IMR-90 (cell line): ENCODE measurements at regions of chr6 and their contacts with region 1.

Region 1: GRCh38 chr6:73129653-73130443 is 95.4 kb downstream of the KHDC1L start:
- DNase-seq: peak; percentile 66
- ATAC-seq: peak; percentile 95
- H3K4me3 ChIP-seq: no peak overlapping the region
- H3K27ac ChIP-seq: no peak overlapping the region
- H3K4me1 ChIP-seq: peaks cover 8% of the 10 kb centered on the region
- H3K27me3 ChIP-seq: no peaks in the 10 kb centered on the region
- CTCF ChIP-seq: peak; percentile 97
- POLR2A ChIP-seq: peak; percentile 60; the same call in 1 of the 2 replicates
- RAD21 ChIP-seq: peak; percentile 98

Region 2: DNA sequence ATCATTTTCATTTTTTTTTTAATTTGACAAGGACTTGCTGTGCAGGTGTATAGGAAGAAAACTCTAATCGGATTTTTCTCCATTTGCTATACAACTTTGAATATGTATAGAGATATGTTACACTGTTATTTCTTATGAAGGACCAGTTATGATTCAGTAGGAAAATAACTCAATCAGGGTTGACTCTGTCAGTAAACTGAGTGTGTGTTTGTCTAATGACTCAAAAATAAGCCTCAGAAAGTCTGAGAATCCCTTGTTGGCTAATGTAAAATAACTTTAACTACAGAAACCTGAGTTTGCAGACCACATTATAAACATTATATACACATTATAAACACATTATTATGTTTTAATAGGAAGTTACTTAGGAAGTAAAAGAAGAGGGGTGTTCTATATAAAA is 890.9 kb before region 1 on chr6:
- CTCF ChIA-PET with region 1: no interaction called
- POLR2A ChIA-PET with region 1: no interaction called
- dilution Hi-C with region 1: no loop called
- in situ Hi-C with region 1: no loop called
- intact Hi-C with region 1: no loop called
- DNase-seq: peak; percentile 69
- ATAC-seq: peak; percentile 59
- H3K4me3 ChIP-seq: no peak overlapping the region
- H3K27ac ChIP-seq: no peak overlapping the region
- H3K4me1 ChIP-seq: peaks cover 2% of the 10 kb centered on the region; the same call in 1 of the 2 replicates
- H3K27me3 ChIP-seq: no peaks in the 10 kb centered on the region
- CTCF ChIP-seq: no peak
- POLR2A ChIP-seq: no peak
- RAD21 ChIP-seq: no peak

Region 3: DNA sequence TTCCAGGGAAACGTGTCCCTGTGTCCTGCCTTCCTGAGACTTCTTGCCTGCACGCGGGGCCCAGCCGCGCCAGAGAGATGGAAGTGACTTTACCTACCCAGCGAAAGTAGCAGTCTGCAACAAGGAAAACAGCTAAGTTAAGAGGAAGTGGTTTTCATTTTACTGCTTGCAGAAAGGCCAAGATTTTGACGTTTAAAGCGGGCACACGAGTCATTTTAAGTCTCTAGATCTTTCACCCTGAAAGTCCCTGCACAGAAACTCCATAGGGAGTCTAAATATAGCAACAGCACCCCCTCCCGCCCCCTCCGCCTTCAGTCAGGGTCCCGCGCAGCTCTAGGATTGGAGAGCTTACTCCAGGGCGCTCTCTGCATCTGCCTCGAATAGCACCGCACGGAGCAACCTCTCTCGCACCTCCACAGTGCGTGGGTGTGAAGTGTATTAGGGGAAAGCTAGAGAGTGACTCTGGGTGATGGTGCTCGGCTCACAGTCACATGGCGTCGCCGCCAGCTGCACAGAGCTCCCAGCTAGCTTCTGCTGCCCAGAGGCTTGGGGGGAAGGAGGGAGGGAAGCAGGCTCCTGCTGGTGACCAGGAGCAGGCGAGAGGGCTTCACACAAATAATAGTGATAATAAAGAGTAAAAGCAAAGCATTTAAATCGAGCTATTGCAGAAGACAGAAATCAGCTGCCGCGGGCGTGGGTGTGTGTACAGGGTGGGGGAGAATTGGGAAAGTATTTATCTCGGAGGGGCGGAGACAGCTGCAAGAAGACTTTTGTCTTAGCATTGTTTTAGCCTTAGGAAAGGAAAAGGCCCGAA is 509.8 kb before region 1 on chr6:
- CTCF ChIA-PET with region 1: interaction called, 19 read pairs
- POLR2A ChIA-PET with region 1: no interaction called
- dilution Hi-C with region 1: no loop called
- in situ Hi-C with region 1: loop called (anchors 5 kb)
- intact Hi-C with region 1: loop called (anchors 1 kb)
- DNase-seq: peak; percentile 45
- ATAC-seq: peak; percentile 9
- H3K4me3 ChIP-seq: peak overlapping the region; percentile 27
- H3K27ac ChIP-seq: no peak overlapping the region
- H3K4me1 ChIP-seq: 0 out of 2 replicates have a peak, but pooled peaks cover 2% of the 10 kb centered on the region
- H3K27me3 ChIP-seq: no peaks in the 10 kb centered on the region
- CTCF ChIP-seq: no peak
- POLR2A ChIP-seq: no peak
- RAD21 ChIP-seq: no peak

Region 4: DNA sequence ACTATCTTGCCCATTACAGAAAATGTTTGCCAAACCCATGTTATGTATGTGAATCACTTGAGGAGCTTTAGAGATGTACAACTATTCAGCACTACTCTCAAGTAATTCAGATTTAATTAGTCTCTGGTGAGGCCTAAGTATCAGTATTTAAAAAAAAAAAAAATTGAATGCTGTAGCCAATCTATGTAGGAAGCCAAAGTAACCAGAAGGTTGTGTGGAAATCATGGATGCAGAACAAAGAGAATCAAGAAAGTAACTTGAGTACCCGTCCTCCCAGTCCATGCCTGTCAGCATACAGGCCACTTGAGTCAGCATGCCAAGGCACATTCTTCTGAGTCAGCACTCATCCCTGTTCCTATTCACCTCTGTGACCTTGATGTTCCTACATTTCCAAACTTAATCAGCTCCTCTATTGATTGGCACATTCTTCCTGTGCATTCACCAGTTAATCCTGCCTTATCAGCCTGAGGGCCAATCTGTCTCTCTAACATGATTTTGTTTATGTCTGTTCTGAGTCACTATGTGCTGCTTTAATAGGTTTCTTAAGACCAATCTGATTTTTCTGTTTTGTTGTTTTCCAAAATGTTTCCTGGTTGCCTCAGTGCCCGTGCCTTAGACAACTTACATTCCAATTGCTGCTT is 342.3 kb before region 1 on chr6:
- CTCF ChIA-PET with region 1: no interaction called
- POLR2A ChIA-PET with region 1: interaction called, 3 read pairs
- dilution Hi-C with region 1: no loop called
- in situ Hi-C with region 1: no loop called
- intact Hi-C with region 1: loop called (anchors 10 kb)
- DNase-seq: peak; percentile 78
- ATAC-seq: peak; percentile 67
- H3K4me3 ChIP-seq: no peak overlapping the region
- H3K27ac ChIP-seq: no peak overlapping the region
- H3K4me1 ChIP-seq: peaks cover 11% of the 10 kb centered on the region
- H3K27me3 ChIP-seq: no peaks in the 10 kb centered on the region
- CTCF ChIP-seq: no peak
- POLR2A ChIP-seq: no peak
- RAD21 ChIP-seq: no peak

Region 5: GRCh38 chr6:73329201-73329600 is 199.4 kb after region 1 on chr6:
- CTCF ChIA-PET with region 1: no interaction called
- POLR2A ChIA-PET with region 1: no interaction called
- dilution Hi-C with region 1: no loop called
- in situ Hi-C with region 1: no loop called
- intact Hi-C with region 1: loop called (anchors 5 kb)
- DNase-seq: no peak
- ATAC-seq: no peak
- H3K4me3 ChIP-seq: no peak overlapping the region
- H3K27ac ChIP-seq: no peak overlapping the region
- H3K4me1 ChIP-seq: no peaks in the 10 kb centered on the region
- H3K27me3 ChIP-seq: peaks cover 9% of the 10 kb centered on the region
- CTCF ChIP-seq: no peak
- POLR2A ChIP-seq: no peak
- RAD21 ChIP-seq: no peak

Region 6: GRCh38 chr6:73367761-73368355 is 238.0 kb after region 1 on chr6:
- CTCF ChIA-PET with region 1: no interaction called
- POLR2A ChIA-PET with region 1: no interaction called
- dilution Hi-C with region 1: no loop called
- in situ Hi-C with region 1: no loop called
- intact Hi-C with region 1: no loop called
- DNase-seq: no peak
- ATAC-seq: no peak
- H3K4me3 ChIP-seq: no peak overlapping the region
- H3K27ac ChIP-seq: no peak overlapping the region
- H3K4me1 ChIP-seq: no peaks in the 10 kb centered on the region
- H3K27me3 ChIP-seq: peaks cover 3% of the 10 kb centered on the region
- CTCF ChIP-seq: no peak
- POLR2A ChIP-seq: no peak
- RAD21 ChIP-seq: no peak